ENCODE measurements at regions of chr5 and their contacts with region 1.

Region 1: GRCh38 chr5:6632917-6633468 is at the starts of genes NSUN2 and SRD5A1:
- DNase-seq: peak; percentile 94 to 97
- H3K4me3 ChIP-seq: peak within 1 kb of the TSS; percentile 80 to 98 (median 92)
- H3K27ac ChIP-seq: peak within 1 kb of the TSS; percentile 92 to 98 (median 93)
- H3K4me1 ChIP-seq: peaks cover 26 to 59% (median 51%) of the 10 kb centered on the region in 4 donors
- H3K27me3 ChIP-seq: no peaks in the 10 kb centered on the region
- CTCF ChIP-seq: no peak
- EP300 ChIP-seq: no peak
- POLR2A ChIP-seq: no peak
- total RNA-seq, gene NSUN2: 39.6 to 249 (median 74.0) TPM
- total RNA-seq, gene SRD5A1: 1.3 to 7.7 (median 4.8) TPM in 4 of 5 donors, not detected in the other

Region 2: GRCh38 chr5:6302684-6303083 is 330.3 kb before region 1 on chr5:
- intact Hi-C with region 1: no loop called
- DNase-seq: no peak
- H3K4me3 ChIP-seq: no peak overlapping the region
- H3K27ac ChIP-seq: no peak overlapping the region
- H3K4me1 ChIP-seq: no peaks in the 10 kb centered on the region
- H3K27me3 ChIP-seq: no peaks in the 10 kb centered on the region
- CTCF ChIP-seq: no peak
- EP300 ChIP-seq: no peak
- POLR2A ChIP-seq: no peak

Region 3: DNA sequence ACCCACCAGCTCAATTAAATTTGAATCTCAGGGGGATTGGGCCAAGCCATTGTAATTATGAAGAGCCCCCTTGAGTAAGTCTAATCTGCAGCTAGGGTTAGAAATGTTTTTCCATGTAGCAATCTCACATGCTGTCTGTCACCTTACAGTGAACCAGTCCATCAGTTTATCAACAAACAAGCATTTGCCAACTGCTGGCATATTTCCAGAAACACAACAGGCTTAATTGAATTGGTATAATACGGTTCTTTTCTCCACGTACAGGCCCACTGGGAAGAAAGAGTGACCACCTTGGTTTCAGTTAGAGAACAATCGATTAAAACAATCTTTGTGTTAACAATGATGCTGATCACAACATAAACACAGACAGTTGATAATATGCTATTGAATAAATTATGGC is 67.5 kb before region 1 on chr5:
- intact Hi-C with region 1: no loop called
- DNase-seq: no peak
- H3K4me3 ChIP-seq: no peak overlapping the region
- H3K27ac ChIP-seq: no peak overlapping the region
- H3K4me1 ChIP-seq: no peaks in the 10 kb centered on the region
- H3K27me3 ChIP-seq: peaks cover 0 to 16% (median 0%) of the 10 kb centered on the region in 3 donors
- CTCF ChIP-seq: no peak
- EP300 ChIP-seq: no peak
- POLR2A ChIP-seq: no peak

Region 4: GRCh38 chr5:6714221-6715041 is 81.4 kb after region 1 on chr5:
- intact Hi-C with region 1: loop called (anchors 5 kb)
- DNase-seq: peak in 1 of 2 donors; percentile 60
- H3K4me3 ChIP-seq: peak overlapping the region; percentile 56 to 94 (median 66)
- H3K27ac ChIP-seq: peak overlapping the region; percentile 55 to 99 (median 92)
- H3K4me1 ChIP-seq: peaks cover 44 to 56% (median 54%) of the 10 kb centered on the region in 4 donors
- H3K27me3 ChIP-seq: no peaks in the 10 kb centered on the region
- CTCF ChIP-seq: no peak
- EP300 ChIP-seq: no peak
- POLR2A ChIP-seq: no peak

Region 5: DNA sequence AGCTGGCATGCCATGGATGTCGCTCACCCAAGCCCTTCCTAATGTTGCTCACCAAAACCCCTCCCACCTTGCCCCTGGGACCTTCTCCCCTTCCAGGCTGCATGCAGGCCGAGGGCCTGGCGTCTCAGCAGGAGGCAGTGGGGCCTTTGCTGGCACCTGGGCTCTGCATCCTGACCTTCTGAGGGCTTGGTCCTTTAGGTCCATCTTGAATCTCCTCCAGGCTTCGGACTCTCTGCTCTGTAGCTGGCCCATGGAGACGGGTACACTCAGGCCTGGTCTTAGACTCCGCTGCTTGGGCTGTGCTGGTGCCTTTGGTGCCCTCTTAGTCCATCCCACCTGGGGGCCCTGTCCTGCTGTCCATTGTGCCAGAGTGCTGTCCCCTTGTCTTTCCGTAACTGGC is 94.2 kb after region 1 on chr5:
- intact Hi-C with region 1: no loop called
- DNase-seq: no peak
- H3K4me3 ChIP-seq: no peak overlapping the region
- H3K27ac ChIP-seq: no peak overlapping the region
- H3K4me1 ChIP-seq: peaks cover 56 to 98% (median 76%) of the 10 kb centered on the region in 4 donors
- H3K27me3 ChIP-seq: no peaks in the 10 kb centered on the region
- CTCF ChIP-seq: no peak
- EP300 ChIP-seq: no peak
- POLR2A ChIP-seq: no peak

Region 6: DNA sequence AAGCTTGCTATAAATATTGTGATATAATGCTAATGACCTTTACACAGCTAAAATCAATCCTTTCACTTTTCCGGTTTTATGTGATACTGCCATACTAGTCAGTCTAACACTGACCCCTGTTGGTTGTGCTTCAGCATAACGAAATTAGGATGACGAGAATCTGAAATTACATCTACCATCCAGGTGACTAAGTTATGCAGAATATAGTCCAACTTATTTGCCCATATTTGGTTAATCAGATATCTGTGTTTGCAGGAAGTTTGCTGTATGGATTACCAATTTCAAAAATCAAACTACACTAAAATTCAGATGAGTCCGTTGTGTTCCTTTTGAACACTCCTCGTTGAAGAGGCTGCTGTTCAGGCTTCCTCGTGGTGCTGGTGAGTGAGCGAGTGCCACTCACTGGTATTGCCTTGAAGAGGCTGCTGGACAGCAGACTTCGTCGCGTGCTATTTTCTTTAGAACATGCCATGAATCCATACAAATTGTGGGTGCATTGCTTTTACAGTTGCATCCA is 112.8 kb after region 1 on chr5:
- intact Hi-C with region 1: loop called (anchors 10 kb)
- DNase-seq: peak in 1 of 2 donors; percentile 84
- H3K4me3 ChIP-seq: no peak overlapping the region
- H3K27ac ChIP-seq: peak overlapping the region in 2 of 5 donors; percentile 8 to 26
- H3K4me1 ChIP-seq: peaks cover 0 to 10% (median 2%) of the 10 kb centered on the region in 4 donors
- H3K27me3 ChIP-seq: no peaks in the 10 kb centered on the region
- CTCF ChIP-seq: peak in 5 of 7 experiments; percentile 49 to 81 (median 74)
- EP300 ChIP-seq: no peak
- POLR2A ChIP-seq: no peak

Measured in stomach (tissue), 19 donors.